ENCODE measurements at regions of chr15 and their contacts with region 1.

Region 1: DNA sequence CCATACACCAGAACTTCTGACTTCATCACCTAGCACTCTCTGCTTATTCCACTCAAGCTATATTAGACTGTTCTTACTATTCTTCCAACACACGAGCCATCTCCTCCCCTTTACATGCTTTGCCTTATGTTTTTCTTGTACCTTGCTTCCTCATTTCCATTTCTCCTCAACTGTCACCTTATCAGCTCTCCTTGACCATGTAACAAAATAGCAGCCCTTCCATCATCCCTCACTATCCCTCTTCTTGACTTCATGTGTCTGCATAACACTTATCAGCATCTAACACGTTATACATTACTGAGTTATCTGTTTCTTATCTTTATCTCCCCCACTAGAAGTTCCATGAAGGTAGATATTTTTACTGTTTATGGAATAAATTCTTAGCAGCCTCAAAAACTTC is 45.3 kb downstream of the TRPM7 start:
- DNase-seq: no peak
- ATAC-seq: no peak
- H3K4me3 ChIP-seq: no peak overlapping the region
- H3K27ac ChIP-seq: no peak overlapping the region
- H3K4me1 ChIP-seq: no peaks in the 10 kb centered on the region
- H3K27me3 ChIP-seq: no peaks in the 10 kb centered on the region
- CTCF ChIP-seq: no peak
- POLR2A ChIP-seq: no peak

Region 2: DNA sequence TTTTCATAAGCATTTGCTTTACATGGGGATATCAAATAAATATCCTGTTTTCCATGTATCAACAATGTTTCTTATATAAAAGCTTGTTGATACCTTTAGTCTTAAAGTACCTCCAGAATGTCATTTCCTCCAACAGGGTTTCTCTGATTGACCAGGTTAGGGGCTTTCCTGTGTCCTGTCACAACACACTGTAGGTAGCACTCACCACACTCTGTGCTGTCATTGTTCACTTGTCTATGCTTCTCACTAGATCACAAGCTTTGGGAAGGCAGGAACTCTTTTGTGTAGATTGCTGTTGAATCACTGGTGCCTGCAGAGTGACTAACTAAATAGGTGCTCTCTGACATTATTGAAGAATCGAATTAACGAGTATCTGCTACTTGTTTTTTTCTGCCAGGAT is 144.6 kb before region 1 on chr15:
- intact Hi-C with region 1: loop called in 1 of 10 experiments (anchors 10 kb)
- DNase-seq: no peak
- ATAC-seq: no peak
- H3K4me3 ChIP-seq: no peak overlapping the region
- H3K27ac ChIP-seq: no peak overlapping the region
- H3K4me1 ChIP-seq: peaks cover 0 to 4% (median 0%) of the 10 kb centered on the region in 12 donors
- H3K27me3 ChIP-seq: no peaks in the 10 kb centered on the region
- CTCF ChIP-seq: no peak
- POLR2A ChIP-seq: no peak

Region 3: DNA sequence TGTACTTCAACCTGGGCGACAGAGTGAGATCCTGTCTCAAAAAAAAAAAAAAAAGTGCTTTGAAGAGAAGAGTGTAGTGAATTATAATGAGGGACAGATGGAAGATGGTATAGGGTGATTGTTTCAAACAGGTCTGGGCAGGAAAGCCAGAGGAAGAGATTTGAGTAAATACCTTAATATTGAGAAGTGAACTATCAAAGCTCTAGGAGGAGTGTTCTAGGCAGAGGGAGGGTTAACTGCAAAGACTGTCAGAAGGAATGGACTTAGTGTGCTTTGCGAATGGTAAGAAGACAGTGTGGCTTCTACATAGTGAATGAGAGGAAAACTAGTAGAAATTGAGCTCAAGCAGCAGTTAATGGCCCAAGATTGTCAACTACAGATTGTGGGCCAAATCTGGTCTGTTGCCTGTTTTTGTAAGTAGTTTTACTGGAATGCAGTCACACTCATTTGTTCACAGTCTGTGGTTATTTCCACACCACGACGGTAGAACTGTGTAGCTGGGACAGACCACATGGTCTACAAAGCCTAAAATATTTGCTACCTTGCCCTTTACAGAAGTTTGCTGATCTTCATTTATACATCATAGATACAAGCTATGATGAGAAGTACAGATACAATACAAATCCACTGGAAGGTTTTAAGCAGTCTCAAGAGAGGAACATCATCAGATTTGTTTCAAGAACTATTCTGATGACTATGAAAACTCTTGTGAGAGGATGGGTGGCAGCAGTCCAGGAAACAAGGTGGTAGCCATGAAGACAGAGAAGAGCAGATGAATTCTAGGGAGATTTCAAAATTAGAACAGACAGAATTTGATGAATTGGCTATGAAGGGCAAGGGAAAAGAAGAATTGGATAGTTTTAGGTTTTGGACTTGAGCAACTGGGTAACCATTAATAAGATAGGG is 78.3 kb before region 1 on chr15:
- intact Hi-C with region 1: loop called in 1 of 10 experiments (anchors 10 kb)
- DNase-seq: no peak
- ATAC-seq: peak in 1 of 4 donors; percentile 14
- H3K4me3 ChIP-seq: no peak overlapping the region
- H3K27ac ChIP-seq: no peak overlapping the region
- H3K4me1 ChIP-seq: no peaks in the 10 kb centered on the region
- H3K27me3 ChIP-seq: no peaks in the 10 kb centered on the region
- CTCF ChIP-seq: no peak
- POLR2A ChIP-seq: no peak

Region 4: GRCh38 chr15:50590288-50590687 is 51.0 kb before region 1 on chr15:
- intact Hi-C with region 1: loop called in 2 of 10 experiments (anchors 10 kb)
- DNase-seq: no peak
- ATAC-seq: no peak
- H3K4me3 ChIP-seq: no peak overlapping the region
- H3K27ac ChIP-seq: no peak overlapping the region
- H3K4me1 ChIP-seq: no peaks in the 10 kb centered on the region
- H3K27me3 ChIP-seq: no peaks in the 10 kb centered on the region
- CTCF ChIP-seq: no peak
- POLR2A ChIP-seq: no peak

Region 5: DNA sequence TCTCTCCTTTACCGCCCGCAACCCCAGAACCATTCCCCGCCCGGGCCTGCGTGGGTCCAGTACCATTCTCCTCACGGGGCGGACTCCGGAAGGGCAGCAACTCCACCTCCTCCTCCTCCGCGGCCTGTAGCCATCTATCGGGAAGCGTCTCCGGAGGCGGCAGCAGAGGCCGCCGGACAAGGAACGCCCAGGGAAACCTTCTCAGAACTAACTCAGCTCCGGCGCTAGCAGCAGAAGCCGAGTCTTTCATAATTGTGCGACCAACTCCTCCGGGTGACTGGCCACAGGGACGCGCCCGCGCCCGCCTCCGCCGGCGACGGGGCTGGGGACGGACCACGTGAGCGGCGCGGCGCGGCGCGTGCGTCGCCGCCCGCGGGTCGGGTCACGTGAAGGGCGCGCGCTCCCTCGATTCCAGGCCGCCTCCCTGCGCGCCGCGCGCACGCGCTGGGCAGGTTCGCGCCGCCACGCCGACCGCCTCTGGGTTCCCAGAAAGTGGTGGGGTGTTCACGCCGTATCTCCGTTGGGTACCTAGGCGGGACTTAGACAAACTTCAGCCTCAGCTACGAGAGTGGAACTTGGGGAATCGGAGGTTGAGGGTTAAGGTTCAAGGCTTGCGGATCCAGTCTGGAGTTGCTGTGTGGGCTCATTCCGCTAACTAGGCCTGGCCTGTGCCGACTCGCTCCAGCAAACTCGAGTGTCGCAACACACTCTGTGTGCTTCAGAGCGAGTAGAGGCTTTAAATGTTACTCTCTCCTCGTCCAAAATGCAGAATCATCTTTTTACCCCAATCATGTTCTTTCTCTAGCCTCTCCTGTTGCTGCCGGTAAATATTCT is 45.4 kb after region 1 on chr15 and contains the start of gene TRPM7:
- intact Hi-C with region 1: no loop called
- DNase-seq: peak; percentile 90 to 95 (median 92)
- ATAC-seq: peak; percentile 80 to 97 (median 94)
- H3K4me3 ChIP-seq: peak within 1 kb of the TSS; percentile 64 to 98 (median 78)
- H3K27ac ChIP-seq: peak within 1 kb of the TSS; percentile 87 to 99 (median 94)
- H3K4me1 ChIP-seq: peaks cover 0 to 47% (median 25%) of the 10 kb centered on the region in 12 donors
- H3K27me3 ChIP-seq: no peaks in the 10 kb centered on the region
- CTCF ChIP-seq: peak in 2 of 12 donors; percentile 9 to 21
- POLR2A ChIP-seq: peak in 1 of 2 donors; percentile 73
- total RNA-seq, gene TRPM7: 25.8 to 49.3 (median 31.0) TPM

Measured in heart left ventricle (tissue), 16 donors.